ENCODE measurements at regions of chr11 and their contacts with region 1.

Region 1: DNA sequence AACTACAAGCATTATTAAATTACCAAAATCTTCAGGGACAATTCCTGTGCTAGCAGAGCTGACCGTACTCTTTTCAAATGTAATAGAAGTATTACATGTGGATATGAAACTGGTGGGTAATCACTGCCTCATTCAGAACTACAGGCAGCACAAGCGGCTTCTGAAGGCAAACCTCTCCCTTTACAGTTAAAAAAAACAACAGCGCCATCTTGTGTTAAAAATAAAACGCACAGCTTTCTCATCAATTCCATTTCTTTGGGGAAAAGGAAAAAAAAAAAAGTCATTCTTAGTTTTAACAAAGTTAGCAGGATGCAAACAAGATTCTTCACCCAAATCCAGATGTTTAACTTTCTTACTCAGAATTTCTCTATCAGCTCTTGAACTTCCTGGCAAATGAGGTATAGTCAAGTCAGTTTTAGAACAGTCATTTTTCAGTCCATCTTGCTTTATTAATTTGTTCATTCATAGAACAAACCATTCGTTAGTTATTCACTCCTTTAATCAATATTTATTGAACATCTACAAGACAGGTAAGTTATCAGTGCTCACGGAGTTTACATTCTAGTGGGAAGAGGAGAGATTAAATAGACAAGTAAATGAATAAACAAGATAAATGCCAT is 331.8 kb upstream of the MPPED2 start:
- DNase-seq: peak; percentile 59

Region 2: DNA sequence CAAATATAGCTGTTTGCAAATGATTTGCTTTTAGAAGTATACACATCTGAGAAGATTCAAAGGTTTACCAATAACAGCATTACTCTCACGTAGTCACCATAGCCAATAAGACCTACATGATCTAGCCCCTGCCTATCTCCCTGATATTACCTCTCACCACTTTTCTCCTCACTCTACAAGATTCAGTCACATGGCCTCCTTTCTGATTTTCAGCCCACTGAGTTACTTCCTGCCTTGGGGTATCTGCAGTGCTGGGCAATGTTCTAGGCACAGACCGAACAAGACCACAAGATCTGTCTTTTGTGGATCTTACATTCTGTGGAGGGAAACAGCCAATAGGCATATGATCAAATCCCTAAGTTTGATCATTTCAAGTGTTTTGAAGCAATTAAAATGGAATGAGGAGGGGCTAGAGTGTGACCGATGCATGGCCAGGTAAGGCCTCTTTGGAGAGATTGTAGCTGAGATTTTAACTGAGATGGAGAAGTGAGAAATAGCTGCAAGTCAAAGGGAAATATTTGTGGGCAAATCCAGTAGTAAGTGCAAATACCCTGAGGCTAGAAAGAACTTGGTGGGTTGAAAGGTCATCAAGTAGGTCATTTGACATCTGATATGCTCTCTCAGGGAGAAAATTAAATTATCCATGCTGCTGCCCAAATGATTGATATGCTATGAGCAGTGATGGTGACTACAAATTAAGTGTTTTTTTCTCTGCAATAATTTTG is 552.0 kb before region 1 on chr11:
- in situ Hi-C with region 1: loop called (anchors 25 kb)
- DNase-seq: no peak

Region 3: GRCh38 chr11:31764766-31765165 is 846.8 kb after region 1 on chr11:
- in situ Hi-C with region 1: no loop called
- DNase-seq: no peak

Measured in KBM-7 (cell line).